MCF 10A (cell line): ENCODE measurements at regions of chr1 and their contacts with region 1.

Region 1: DNA sequence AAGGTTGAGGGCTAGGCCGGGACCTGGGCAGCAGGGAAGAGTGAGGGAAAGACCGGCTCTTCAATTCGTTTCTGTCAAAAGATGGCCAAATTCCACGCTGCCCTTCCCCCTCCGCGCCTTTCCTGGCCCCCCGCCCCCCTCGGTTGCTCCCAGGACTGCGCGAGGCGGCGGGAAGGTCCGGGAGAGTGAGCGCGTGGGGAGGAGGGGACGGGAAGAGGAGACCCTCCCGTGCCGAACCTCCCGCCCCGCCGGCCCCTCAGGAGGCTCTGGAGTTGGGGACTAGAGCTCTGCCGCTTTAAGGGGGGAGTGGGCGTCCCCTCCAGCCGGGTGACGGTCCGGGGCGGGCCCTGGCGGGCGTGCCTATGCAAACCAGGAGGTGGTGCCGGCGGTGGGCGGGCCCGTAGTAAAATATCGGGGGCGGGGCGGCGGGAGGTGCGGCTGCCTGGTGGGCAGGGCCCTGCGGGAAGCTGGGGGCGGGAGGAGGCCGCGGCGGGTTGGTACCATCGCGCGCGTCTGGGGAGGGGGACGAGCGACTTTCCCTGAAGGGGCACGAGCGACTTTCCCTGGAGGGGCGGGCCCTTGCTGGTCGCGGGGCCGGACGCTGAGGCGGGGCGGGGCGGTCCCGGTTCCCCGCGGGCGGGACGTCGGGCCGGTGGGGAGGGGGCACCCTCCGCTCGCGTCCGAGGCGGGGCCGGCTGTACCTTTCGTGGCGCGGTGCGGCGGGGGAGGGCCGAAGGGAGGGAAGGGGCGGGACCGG is 58.2 kb downstream of the BCL9 start:
- DNase-seq: peak; percentile 95
- H3K4me3 Mint-ChIP-seq: peak overlapping the region; percentile 78
- H3K27ac Mint-ChIP-seq: no peak overlapping the region
- H3K4me1 Mint-ChIP-seq: peaks cover 14% of the 10 kb centered on the region
- H3K27me3 Mint-ChIP-seq: no peaks in the 10 kb centered on the region
- CTCF ChIP-seq: no peak

Region 2: DNA sequence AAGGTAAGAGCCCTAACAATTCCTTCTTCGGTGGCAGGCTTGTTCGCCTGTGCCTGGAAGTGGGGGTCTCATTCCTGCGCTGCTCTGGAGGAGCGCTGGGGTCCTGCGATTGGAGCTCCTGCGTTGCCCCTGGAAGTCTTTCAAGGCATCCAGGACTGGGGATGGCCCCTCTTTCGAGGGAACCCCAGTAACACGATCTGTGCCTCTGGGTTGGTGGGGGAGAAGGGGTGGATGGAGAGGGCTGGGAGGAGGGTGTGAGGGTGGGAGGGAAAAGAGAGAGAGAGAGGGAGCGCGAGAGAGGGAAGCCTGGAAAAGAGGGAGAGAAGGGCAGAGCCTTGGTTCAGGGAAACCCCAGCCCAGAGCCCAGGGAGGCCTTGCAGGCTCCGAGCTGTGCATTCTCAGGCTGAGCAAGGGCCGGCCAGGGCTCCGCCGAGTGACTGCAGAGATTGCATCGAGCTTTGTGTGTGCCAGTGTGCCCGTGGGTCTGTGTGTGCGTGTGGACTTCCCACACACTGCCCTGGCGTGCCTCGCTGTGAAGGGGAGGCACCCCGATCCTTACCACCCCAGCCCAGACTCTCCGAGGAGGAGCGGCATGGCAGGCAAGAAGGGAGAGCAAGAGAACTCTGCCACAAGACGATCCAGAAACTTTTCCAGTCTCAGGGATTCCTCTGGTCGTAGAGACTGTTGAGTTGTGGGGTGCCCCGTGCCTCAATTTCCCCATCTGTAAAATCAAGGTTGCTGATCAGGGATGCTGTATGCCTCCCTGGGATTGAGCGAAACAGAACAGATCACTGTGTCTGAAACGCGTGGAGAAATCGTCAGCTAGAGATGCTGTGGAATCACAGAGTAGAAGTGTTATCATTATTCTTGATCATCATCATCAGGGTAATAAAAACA is 57.6 kb before region 1 on chr1:
- CTCF ChIA-PET with region 1: interaction called, 3 read pairs
- POLR2A ChIA-PET with region 1: interaction called, 13 read pairs
- intact Hi-C with region 1: loop called (anchors 1 kb)
- DNase-seq: no peak
- H3K4me3 Mint-ChIP-seq: no peak overlapping the region
- H3K27ac Mint-ChIP-seq: no peak overlapping the region
- H3K4me1 Mint-ChIP-seq: peaks cover 22% of the 10 kb centered on the region
- H3K27me3 Mint-ChIP-seq: peaks cover 17% of the 10 kb centered on the region
- CTCF ChIP-seq: no peak

Region 3: GRCh38 chr1:147670317-147671041 is 70.9 kb after region 1 on chr1 and contains the start of gene ACP6:
- CTCF ChIA-PET with region 1: no interaction called
- POLR2A ChIA-PET with region 1: interaction called, 4 read pairs
- intact Hi-C with region 1: loop called (anchors 2 kb)
- DNase-seq: peak; percentile 98
- H3K4me3 Mint-ChIP-seq: peak within 1 kb of the TSS; percentile 93
- H3K27ac Mint-ChIP-seq: peak within 1 kb of the TSS; percentile 75
- H3K4me1 Mint-ChIP-seq: peaks cover 18% of the 10 kb centered on the region
- H3K27me3 Mint-ChIP-seq: no peaks in the 10 kb centered on the region
- CTCF ChIP-seq: no peak
- total RNA-seq, gene ACP6: 40.5 and 54.1 TPM in 2 replicates

Region 4: GRCh38 chr1:147781056-147781471 is 181.5 kb after region 1 on chr1:
- CTCF ChIA-PET with region 1: no interaction called
- POLR2A ChIA-PET with region 1: no interaction called
- intact Hi-C with region 1: no loop called
- DNase-seq: peak; percentile 37
- H3K4me3 Mint-ChIP-seq: no peak overlapping the region
- H3K27ac Mint-ChIP-seq: no peak overlapping the region
- H3K4me1 Mint-ChIP-seq: no peaks in the 10 kb centered on the region
- H3K27me3 Mint-ChIP-seq: no peaks in the 10 kb centered on the region
- CTCF ChIP-seq: no peak